ENCODE measurements at regions of chr21 and their contacts with region 1.

Region 1: DNA sequence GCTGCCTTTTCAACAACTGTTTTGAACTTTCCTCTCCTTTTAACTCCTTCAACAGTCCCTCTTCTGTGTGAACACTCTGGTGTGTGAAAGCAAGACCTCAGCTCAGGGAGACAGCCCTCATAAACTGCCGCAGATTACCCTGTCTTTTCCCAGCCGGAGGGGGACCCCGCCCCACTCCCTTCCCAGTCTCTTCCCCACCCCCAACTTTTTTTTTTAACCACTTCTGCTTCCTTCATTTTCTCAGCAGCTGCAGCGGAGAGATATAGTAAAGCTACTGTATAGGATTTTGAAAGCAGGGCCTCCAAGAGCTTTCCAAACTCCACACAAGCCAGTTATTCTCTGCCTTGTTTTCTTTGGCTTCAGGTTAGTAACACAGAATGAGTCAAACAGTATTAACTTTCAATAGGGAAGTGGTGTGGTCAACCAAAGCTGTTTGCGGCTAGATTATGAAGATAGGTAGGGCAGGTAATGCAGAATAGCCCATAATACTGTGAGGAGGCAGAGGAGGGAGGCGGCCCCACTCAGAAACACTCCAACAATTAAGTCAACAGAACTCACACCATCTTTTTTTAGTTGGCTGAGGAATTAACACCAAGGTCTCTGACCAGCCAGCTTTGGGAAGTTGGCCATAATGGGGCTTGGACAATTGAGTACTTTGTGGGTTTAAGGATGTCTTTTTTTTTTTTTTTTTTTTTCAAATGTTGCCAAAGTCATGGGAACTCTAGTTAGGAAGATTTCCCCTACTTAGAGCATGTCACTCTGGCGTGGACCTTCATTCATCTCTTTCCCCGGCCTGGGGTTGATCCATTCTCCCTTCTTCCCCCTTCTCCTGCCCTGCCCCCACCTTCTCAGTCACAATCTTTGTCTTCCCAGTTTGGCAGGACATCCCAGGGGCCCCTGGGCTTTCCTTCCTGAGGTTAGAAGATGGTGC is 177.0 kb downstream of the CLIC6 start:
- DNase-seq: peak; percentile 70
- H3K4me3 Mint-ChIP-seq: peak overlapping the region; percentile 35
- H3K27ac Mint-ChIP-seq: peak overlapping the region; percentile 47
- H3K4me1 Mint-ChIP-seq: peaks cover 43% of the 10 kb centered on the region
- H3K27me3 Mint-ChIP-seq: no peaks in the 10 kb centered on the region

Region 2: GRCh38 chr21:34807146-34807880 is 38.5 kb before region 1 on chr21:
- intact Hi-C with region 1: loop called (anchors 2 kb)
- DNase-seq: peak; percentile 44
- H3K4me3 Mint-ChIP-seq: no peak overlapping the region
- H3K27ac Mint-ChIP-seq: peak overlapping the region; percentile 89
- H3K4me1 Mint-ChIP-seq: peaks cover 83% of the 10 kb centered on the region
- H3K27me3 Mint-ChIP-seq: no peaks in the 10 kb centered on the region